H1 (cell line): ENCODE measurements at regions of chr20 and their contacts with region 1.

Region 1: DNA sequence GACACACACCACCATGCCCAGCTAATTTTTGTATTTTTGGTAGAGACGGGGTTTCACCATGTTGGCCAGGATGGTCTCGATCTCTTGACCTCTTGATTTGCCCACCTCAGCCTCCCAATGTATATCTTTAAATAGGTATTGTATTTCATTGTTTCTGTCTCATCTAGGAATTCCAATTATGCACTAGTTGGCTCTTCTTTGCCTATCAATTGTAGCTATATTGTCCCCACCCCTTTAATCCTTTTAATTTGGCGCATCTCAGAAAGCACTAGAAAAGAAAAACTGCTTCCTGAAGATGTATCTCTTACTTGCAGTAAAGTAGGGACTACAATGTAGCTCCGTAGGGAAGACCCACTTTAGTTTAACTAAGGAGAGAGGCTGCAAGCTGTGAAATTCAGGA is 10.5 kb upstream of the MAVS start:
- DNase-seq: no peak
- H3K4me3 ChIP-seq: no peak overlapping the region
- H3K27ac ChIP-seq: no peak overlapping the region
- H3K4me1 ChIP-seq: no peaks in the 10 kb centered on the region
- H3K27me3 ChIP-seq: no peaks in the 10 kb centered on the region
- CTCF ChIP-seq: no peak
- EP300 ChIP-seq: no peak
- POLR2A ChIP-seq: no peak
- RAD21 ChIP-seq: no peak

Region 2: GRCh38 chr20:3744806-3745685 is 91.1 kb before region 1 on chr20:
- CTCF ChIA-PET with region 1: no interaction called
- POLR2A ChIA-PET with region 1: no interaction called
- DNase-seq: peak; percentile 95 to 100
- H3K4me3 ChIP-seq: peak overlapping the region; percentile 50 to 74 (median 61)
- H3K27ac ChIP-seq: no peak overlapping the region
- H3K4me1 ChIP-seq: peaks cover 0 to 14% (median 10%) of the 10 kb centered on the region in 4 experiments; a peak in 5 of 7 replicates
- H3K27me3 ChIP-seq: peaks cover 0 to 10% (median 9%) of the 10 kb centered on the region in 4 experiments; a peak in 4 of 7 replicates
- CTCF ChIP-seq: peak in 1 of 3 experiments; percentile 0; a peak in 1 of 4 replicates
- EP300 ChIP-seq: no peak
- POLR2A ChIP-seq: no peak; a peak in 1 of 3 replicates
- RAD21 ChIP-seq: 0 out of 4 replicates have a peak, but pooled peaks of 1 of the 2 experiments have one; percentile 15

Region 3: GRCh38 chr20:3825526-3825925 is 10.6 kb before region 1 on chr20:
- CTCF ChIA-PET with region 1: interaction called, 11 read pairs
- POLR2A ChIA-PET with region 1: interaction called, 8 read pairs
- DNase-seq: no peak
- H3K4me3 ChIP-seq: no peak overlapping the region
- H3K27ac ChIP-seq: no peak overlapping the region
- H3K4me1 ChIP-seq: peaks cover 0 to 3% (median 1%) of the 10 kb centered on the region in 4 experiments; a peak in 1 of 7 replicates
- H3K27me3 ChIP-seq: no peaks in the 10 kb centered on the region
- CTCF ChIP-seq: peak; percentile 32 to 50 (median 36); a peak in 3 of 4 replicates
- EP300 ChIP-seq: no peak
- POLR2A ChIP-seq: no peak
- RAD21 ChIP-seq: no peak; a peak in 1 of 4 replicates

Region 4: GRCh38 chr20:3871550-3872297 is 35.6 kb after region 1 on chr20:
- CTCF ChIA-PET with region 1: no interaction called
- POLR2A ChIA-PET with region 1: no interaction called
- DNase-seq: no peak
- H3K4me3 ChIP-seq: no peak overlapping the region
- H3K27ac ChIP-seq: no peak overlapping the region
- H3K4me1 ChIP-seq: no peaks in the 10 kb centered on the region
- H3K27me3 ChIP-seq: no peaks in the 10 kb centered on the region
- CTCF ChIP-seq: no peak
- EP300 ChIP-seq: no peak
- POLR2A ChIP-seq: no peak
- RAD21 ChIP-seq: no peak

Region 5: DNA sequence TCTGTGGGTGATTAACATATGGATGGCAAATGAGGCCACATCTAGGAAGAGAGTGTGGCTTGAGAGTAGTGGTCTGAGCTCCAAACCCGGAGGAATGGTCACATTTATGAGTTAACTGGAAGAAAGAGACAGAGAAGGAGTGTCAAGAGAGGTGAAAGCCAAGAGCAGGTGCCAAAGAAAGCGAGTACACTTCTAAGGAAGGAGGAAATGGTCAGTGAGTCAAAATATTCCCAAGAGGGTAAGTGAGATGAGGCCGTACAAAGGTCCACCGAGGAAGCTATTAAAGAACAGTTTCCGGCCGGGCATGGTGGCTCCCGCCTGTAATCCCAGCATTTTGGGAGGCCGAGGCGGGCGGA is 283.7 kb after region 1 on chr20:
- CTCF ChIA-PET with region 1: no interaction called
- POLR2A ChIA-PET with region 1: no interaction called
- DNase-seq: no peak
- H3K4me3 ChIP-seq: no peak overlapping the region
- H3K27ac ChIP-seq: no peak overlapping the region
- H3K4me1 ChIP-seq: no peaks in the 10 kb centered on the region
- H3K27me3 ChIP-seq: no peaks in the 10 kb centered on the region
- CTCF ChIP-seq: no peak
- EP300 ChIP-seq: no peak
- POLR2A ChIP-seq: no peak
- RAD21 ChIP-seq: no peak